ENCODE measurements at regions of chr7 and their contacts with region 1.

Region 1: DNA sequence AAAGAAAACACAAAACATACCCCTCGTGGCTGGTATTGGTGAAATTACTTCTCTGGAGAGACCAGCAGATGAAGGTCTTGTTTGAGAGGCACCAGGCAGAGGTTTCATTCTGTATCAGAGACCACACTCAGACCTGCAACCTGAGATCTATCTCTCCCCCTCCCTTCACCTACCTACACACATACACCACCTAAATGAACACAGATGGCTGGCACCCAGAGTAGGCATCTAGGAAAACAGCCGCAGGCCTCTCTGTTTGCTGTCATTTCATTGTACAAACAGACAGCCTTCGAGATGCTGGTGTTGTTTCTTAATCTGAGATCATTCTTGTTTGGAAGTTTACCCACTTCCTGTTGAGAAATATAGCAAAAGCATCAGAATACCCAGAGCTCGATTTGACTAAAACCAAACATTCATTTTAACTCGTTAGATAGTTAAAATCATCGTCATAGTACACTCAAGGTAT is 173.9 kb upstream of the SLC25A13 start:
- DNase-seq: peak; percentile 15
- H3K4me3 Mint-ChIP-seq: peak overlapping the region; percentile 60
- H3K27ac Mint-ChIP-seq: peak overlapping the region; percentile 86
- H3K4me1 Mint-ChIP-seq: peaks cover 20% of the 10 kb centered on the region
- H3K27me3 Mint-ChIP-seq: peaks cover 7% of the 10 kb centered on the region

Region 2: GRCh38 chr7:96285579-96285978 is 210.2 kb before region 1 on chr7:
- intact Hi-C with region 1: loop called (anchors 1 kb)
- DNase-seq: peak; percentile 50
- H3K4me3 Mint-ChIP-seq: peak overlapping the region; percentile 66
- H3K27ac Mint-ChIP-seq: peak overlapping the region; percentile 93
- H3K4me1 Mint-ChIP-seq: peaks cover 51% of the 10 kb centered on the region
- H3K27me3 Mint-ChIP-seq: no peaks in the 10 kb centered on the region

Region 3: GRCh38 chr7:96297876-96298275 is 197.9 kb before region 1 on chr7:
- intact Hi-C with region 1: no loop called
- DNase-seq: no peak
- H3K4me3 Mint-ChIP-seq: no peak overlapping the region
- H3K27ac Mint-ChIP-seq: no peak overlapping the region
- H3K4me1 Mint-ChIP-seq: peaks cover 11% of the 10 kb centered on the region
- H3K27me3 Mint-ChIP-seq: no peaks in the 10 kb centered on the region

Region 4: DNA sequence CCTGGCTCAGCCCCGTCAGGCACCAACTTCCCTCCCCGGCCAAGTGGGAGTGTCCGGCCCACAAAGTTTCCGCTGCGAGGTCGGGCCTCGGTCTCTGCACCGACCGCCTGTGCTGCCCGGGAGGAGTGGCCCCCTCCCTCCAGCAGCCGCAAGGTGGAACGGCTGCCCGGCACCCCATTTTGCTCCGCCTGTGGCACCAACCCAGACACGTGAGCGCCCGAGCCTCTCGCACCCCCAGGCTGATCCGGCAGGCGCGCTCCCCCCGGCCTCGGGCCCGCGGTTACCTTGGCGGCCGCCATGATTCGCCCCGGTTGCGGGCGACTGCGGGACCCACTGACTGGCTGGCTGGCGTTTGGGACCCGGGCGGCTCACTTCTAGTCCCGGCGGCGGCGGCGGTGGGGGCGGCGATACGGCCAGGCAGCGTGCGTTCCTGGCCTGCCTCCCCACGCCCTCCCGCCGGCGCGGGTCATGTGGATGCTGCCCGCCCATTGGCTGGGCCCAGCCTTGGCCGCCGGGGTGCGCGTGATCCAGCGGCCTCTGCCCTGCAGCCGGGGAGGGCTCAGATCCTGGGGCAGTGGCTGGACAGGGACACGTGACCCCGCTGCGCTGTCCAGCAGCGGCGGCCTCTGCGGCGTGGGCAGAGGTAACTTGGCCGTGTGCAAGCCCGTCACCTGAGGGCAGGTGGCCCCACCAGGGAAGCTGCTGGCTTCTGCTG is 174.0 kb before region 1 on chr7 and contains the start of gene SLC25A13:
- intact Hi-C with region 1: loop called (anchors 1 kb)
- DNase-seq: peak; percentile 62
- H3K4me3 Mint-ChIP-seq: peak within 1 kb of the TSS; percentile 95
- H3K27ac Mint-ChIP-seq: peak within 1 kb of the TSS; percentile 98
- H3K4me1 Mint-ChIP-seq: peaks cover 41% of the 10 kb centered on the region
- H3K27me3 Mint-ChIP-seq: no peaks in the 10 kb centered on the region
- total RNA-seq, gene SLC25A13: 18.5 and 21.0 TPM in 2 replicates

Region 5: DNA sequence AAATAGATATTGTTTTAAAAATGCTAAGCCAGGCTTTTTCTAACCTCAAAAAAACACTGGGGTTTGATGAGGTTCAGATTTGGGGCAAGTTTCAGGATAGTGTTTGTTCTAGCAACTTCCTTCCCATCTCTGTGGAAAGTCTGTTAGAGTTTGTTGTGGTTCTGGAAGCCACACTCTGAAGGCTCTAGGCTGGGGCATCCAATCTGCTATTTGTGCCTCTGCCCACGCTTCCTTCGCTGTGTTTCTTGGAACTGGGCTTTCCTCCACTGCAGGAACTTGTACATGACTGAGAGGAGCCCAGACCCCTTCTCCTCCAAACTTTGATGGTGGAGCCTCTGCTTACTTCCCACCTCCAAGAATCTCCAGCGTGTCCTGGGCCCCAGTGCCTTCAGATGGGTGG is 65.4 kb before region 1 on chr7:
- intact Hi-C with region 1: loop called (anchors 5 kb)
- DNase-seq: no peak
- H3K4me3 Mint-ChIP-seq: no peak overlapping the region
- H3K27ac Mint-ChIP-seq: no peak overlapping the region
- H3K4me1 Mint-ChIP-seq: peaks cover 24% of the 10 kb centered on the region
- H3K27me3 Mint-ChIP-seq: peaks cover 7% of the 10 kb centered on the region

Region 6: GRCh38 chr7:96823274-96823673 is 327.5 kb after region 1 on chr7:
- intact Hi-C with region 1: loop called (anchors 1 kb)
- DNase-seq: no peak
- H3K4me3 Mint-ChIP-seq: no peak overlapping the region
- H3K27ac Mint-ChIP-seq: no peak overlapping the region
- H3K4me1 Mint-ChIP-seq: no peaks in the 10 kb centered on the region
- H3K27me3 Mint-ChIP-seq: peaks cover 14% of the 10 kb centered on the region

Region 7: DNA sequence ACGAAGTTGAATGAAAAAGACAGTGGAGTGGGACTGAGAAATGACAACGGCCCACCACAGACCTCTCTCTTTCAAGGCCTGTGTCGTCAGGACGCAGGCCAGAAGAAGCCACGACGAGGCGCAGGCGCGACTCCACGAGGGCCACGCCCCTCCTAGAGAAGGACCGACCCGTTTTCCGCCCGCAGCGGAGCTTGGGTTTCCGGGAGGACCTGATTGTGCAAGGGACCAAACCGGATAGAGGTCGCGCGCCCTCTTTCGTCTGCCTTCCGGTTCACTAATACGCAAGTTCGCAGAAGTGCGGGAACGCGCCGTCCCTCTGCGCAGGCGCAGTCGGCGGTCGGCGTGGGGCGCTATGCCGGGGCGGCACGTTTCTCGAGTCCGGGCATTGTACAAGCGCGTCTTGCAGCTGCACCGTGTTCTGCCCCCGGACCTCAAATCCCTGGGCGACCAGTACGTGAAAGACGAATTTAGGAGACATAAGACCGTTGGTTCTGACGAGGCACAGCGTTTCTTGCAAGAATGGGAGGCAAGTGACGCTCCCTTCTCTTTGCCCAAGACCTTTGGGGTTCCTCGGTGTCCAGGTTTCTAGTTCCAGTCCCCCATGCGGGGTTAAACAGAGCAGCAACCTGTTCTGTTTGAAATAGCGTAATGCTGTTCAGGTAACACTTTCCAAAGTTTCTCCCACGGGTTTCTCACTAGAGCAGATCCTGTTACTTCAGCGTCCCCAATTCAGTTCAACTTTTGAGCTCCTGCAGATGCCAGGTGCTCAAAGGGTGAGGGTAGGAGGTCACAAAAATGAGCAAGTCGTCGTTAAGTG is 621.8 kb after region 1 on chr7 and contains the start of gene SDHAF3:
- intact Hi-C with region 1: loop called (anchors 5 kb)
- DNase-seq: peak; percentile 97
- H3K4me3 Mint-ChIP-seq: peak within 1 kb of the TSS; percentile 94
- H3K27ac Mint-ChIP-seq: peak within 1 kb of the TSS; percentile 91
- H3K4me1 Mint-ChIP-seq: peaks cover 37% of the 10 kb centered on the region
- H3K27me3 Mint-ChIP-seq: no peaks in the 10 kb centered on the region
- total RNA-seq, gene SDHAF3: 24.1 and 25.4 TPM in 2 replicates

Measured in activated T-helper 1 cell treated with anti-CD3 and anti-CD28 coated beads, Interleukin-12 subunit alpha, Interleukin-12 subunit beta, Interleukin-2, Interleukin-4 antibody, amounts not matched to agents 30 ng/mL and 10 ng/mL and 1 ng/mL, durations not matched to agents 14 hours and 24 hours and 36 hours (primary cell).